ENCODE measurements at regions of chr20 and their contacts with region 1.

Region 1: DNA sequence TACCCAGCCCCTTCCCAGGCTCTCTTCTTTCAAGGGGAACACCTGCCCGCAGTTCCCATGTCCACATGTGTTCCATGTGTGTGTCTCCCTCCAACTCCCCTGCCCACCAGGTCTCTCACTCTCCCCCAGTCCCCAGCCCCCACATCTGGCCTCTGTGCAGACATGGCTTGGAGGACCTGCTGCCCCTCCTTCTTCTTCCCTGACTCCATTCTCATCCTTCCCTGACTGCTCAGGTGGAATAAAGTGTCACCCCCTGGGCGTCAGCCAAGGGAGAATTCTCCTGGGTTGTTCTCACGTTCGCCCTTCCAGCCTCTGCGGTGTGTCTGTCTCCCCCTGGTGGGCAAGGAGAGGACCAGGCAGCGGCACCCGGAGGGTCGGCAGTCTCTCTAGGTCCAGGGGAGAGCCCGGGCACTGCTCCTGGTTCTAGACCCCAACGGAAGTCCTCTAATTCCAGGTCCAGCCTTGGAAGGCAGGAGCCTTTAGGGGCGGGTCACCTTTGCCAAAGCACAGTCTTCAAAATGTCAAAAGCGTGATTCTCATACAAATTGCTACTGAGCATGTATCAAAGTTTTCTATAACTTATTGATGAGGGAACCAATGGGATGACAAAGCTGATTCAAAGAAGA is 50.5 kb downstream of the EBF4 start:
- DNase-seq: peak; percentile 62 to 85
- H3K4me3 ChIP-seq: no peak overlapping the region
- H3K27ac ChIP-seq: no peak overlapping the region
- H3K4me1 ChIP-seq: peaks cover 2 to 11% (median 6%) of the 10 kb centered on the region in 4 experiments
- H3K27me3 ChIP-seq: peaks cover 0 to 30% (median 9%) of the 10 kb centered on the region in 4 experiments; a peak in 6 of 7 replicates
- CTCF ChIP-seq: peak; percentile 95 to 96 (median 95)
- EP300 ChIP-seq: no peak
- POLR2A ChIP-seq: no peak
- RAD21 ChIP-seq: peak; percentile 82 to 89

Region 2: DNA sequence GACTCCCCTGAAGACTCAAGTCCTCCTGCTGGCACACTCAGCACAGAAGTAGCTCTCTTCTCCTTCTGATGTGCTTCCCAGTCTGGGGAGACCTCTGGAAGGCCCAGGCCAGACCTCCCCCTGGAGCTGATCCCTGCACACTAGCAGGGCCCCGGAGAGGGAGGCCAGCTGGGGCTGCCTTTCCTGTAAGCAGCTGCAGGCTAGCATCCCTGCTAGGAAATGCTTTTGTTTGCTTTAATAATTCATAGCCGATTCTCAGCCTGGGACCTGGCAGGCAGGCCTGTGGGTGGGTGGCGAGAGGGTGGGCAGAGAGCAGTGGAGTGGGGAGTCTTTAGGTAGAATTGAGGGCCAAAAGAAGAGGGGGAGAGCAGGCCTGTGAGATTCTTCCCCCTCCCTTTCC is 45.3 kb before region 1 on chr20:
- CTCF ChIA-PET with region 1: interaction called, 133 read pairs
- POLR2A ChIA-PET with region 1: no interaction called
- DNase-seq: peak in 1 of 2 experiments; percentile 39
- H3K4me3 ChIP-seq: no peak overlapping the region
- H3K27ac ChIP-seq: no peak overlapping the region
- H3K4me1 ChIP-seq: peaks cover 0 to 32% (median 24%) of the 10 kb centered on the region in 4 experiments; a peak in 6 of 7 replicates
- H3K27me3 ChIP-seq: peaks cover 24 to 73% (median 60%) of the 10 kb centered on the region in 4 experiments
- CTCF ChIP-seq: no peak
- EP300 ChIP-seq: no peak
- POLR2A ChIP-seq: no peak
- RAD21 ChIP-seq: no peak

Region 3: DNA sequence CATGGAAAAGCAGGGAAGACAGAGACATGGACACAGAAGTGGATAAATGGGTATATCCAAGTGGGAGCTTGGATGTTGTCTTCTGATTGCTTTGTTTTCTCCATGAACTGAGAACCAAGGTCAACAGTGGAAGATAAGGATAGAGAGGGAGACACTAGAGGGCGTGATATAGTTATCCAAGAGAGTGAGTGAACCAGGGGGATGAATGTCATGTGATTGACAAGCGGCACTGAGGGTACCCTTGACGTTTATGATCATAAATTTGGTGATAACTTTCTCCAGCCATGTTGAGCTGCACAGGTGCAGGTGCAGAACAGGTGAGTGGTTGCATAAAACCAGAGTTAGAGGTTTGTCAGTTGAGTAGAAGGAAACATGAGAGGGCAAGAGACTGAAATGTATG is 29.8 kb before region 1 on chr20:
- CTCF ChIA-PET with region 1: interaction called, 286 read pairs
- POLR2A ChIA-PET with region 1: interaction called, 3 read pairs
- DNase-seq: no peak
- H3K4me3 ChIP-seq: no peak overlapping the region
- H3K27ac ChIP-seq: no peak overlapping the region
- H3K4me1 ChIP-seq: peaks cover 2 to 14% (median 5%) of the 10 kb centered on the region in 4 experiments; a peak in 5 of 7 replicates
- H3K27me3 ChIP-seq: peaks cover 0 to 2% (median 0%) of the 10 kb centered on the region in 4 experiments; a peak in 1 of 7 replicates
- CTCF ChIP-seq: peak in 2 of 3 experiments; percentile 48 to 64; a peak in 2 of 4 replicates
- EP300 ChIP-seq: no peak
- POLR2A ChIP-seq: no peak
- RAD21 ChIP-seq: peak; percentile 62 to 70

Region 4: DNA sequence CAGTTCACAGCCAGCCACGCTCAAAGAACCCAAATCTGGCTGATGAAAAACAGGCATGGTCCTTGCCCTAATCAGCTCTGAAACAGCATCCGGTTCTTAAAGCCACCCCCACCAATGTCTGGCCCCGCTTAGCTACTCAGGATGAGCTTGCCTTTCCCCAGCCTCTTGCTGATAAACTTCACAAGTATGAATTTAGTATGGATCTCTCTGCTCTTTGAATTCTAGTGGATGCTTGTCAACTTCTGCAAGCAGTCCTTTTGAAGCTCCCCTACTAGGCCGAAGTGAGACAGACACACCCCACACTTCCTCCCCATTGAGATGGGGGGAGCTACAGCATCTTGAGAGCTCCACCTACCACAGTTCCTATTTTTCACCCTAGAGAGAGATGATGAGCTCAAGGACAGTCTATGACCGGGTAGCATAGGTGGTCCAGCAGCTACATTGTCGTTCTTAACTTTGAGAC is 13.8 kb before region 1 on chr20:
- CTCF ChIA-PET with region 1: interaction called, 66 read pairs
- POLR2A ChIA-PET with region 1: interaction called, 3 read pairs
- DNase-seq: no peak
- H3K4me3 ChIP-seq: no peak overlapping the region
- H3K27ac ChIP-seq: no peak overlapping the region
- H3K4me1 ChIP-seq: no peaks in the 10 kb centered on the region
- H3K27me3 ChIP-seq: no peaks in the 10 kb centered on the region
- CTCF ChIP-seq: no peak
- EP300 ChIP-seq: no peak
- POLR2A ChIP-seq: no peak
- RAD21 ChIP-seq: no peak